Endothelial cell of umbilical vein (primary cell): ENCODE measurements at regions of chr15 and their contacts with region 1.

Region 1: DNA sequence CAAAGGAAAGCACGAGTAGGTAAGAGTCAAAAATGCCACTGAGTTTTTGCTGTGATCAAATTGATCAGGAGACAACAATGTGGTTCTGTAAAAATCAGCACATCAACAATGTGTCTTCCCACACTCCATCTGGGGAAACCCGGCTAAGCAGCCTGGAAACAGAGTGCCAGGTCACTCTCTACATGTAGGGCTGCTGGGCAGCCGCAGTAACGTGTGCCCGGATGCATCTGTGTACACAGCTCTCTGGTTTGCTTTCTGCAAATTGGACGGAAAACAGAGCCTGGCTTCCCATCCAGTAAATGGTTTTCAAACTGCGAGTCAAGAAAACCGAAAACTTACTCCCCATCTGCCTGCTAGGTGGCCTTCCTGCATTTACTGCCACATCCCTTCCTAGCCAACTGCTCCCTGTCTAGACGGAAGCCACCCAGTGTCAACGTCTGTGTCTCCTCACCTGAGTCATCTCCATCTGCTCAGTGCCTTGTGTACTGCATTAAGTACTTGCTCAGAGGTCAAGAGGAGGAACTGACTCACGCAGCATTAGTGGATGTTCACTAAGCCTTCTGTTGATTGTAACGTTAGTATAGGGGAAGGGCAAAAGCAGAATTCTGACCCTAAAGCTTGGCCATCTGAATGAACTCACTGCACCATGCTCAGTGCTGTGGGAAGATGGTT is 124.1 kb downstream of the TJP1 start:
- DNase-seq: peak; percentile 90
- H3K4me3 ChIP-seq: no peak overlapping the region
- H3K27ac ChIP-seq: peak overlapping the region; percentile 90
- H3K4me1 ChIP-seq: peaks cover 20% of the 10 kb centered on the region
- H3K27me3 ChIP-seq: no peaks in the 10 kb centered on the region
- CTCF ChIP-seq: no peak
- POLR2A ChIP-seq: no peak

Region 2: GRCh38 chr15:29674661-29675533 is 23.3 kb before region 1 on chr15:
- CTCF ChIA-PET with region 1: interaction called, 4 read pairs
- POLR2A ChIA-PET with region 1: no interaction called
- dilution Hi-C with region 1: no loop called
- intact Hi-C with region 1: loop called (anchors 2 kb)
- DNase-seq: peak; percentile 45
- H3K4me3 ChIP-seq: peak overlapping the region; percentile 49 to 78 (median 62)
- H3K27ac ChIP-seq: peak overlapping the region; percentile 17
- H3K4me1 ChIP-seq: peaks cover 13% of the 10 kb centered on the region
- H3K27me3 ChIP-seq: no peaks in the 10 kb centered on the region
- CTCF ChIP-seq: no peak
- POLR2A ChIP-seq: no peak

Region 3: DNA sequence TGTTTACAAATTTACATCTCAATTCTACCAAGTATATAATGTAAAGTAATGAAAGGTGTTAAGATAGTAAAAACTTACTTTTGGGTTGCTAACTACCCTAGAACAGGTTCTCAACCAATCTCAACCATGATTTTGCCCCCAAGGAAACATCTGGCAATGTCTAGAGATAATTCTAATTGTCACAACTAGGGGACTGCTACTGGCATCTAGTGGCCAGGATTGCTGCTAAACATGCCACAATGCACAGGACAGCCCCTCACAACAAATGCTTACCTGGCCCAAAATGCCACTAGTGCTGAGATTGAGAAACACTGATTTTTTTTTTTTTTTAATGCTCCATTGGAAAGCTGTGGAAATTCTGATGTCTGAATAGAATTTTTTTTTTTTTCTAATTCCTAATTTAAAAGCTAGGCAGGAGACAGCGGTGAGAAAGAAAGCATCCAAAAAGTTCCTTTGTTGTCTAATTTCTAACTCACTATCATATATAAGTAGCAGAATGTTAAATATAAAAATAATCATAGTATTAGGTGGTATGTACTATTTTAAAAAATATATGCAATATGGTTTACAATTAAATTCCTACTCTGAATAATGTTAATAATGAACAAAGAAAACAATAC is 42.6 kb after region 1 on chr15:
- CTCF ChIA-PET with region 1: no interaction called
- POLR2A ChIA-PET with region 1: no interaction called
- dilution Hi-C with region 1: no loop called
- intact Hi-C with region 1: loop called (anchors 5 kb)
- DNase-seq: no peak
- H3K4me3 ChIP-seq: no peak overlapping the region
- H3K27ac ChIP-seq: no peak overlapping the region
- H3K4me1 ChIP-seq: peaks cover 14% of the 10 kb centered on the region
- H3K27me3 ChIP-seq: no peaks in the 10 kb centered on the region
- CTCF ChIP-seq: peak; percentile 12
- POLR2A ChIP-seq: no peak

Region 4: GRCh38 chr15:29756358-29757267 is 58.4 kb after region 1 on chr15:
- CTCF ChIA-PET with region 1: no interaction called
- POLR2A ChIA-PET with region 1: no interaction called
- dilution Hi-C with region 1: no loop called
- intact Hi-C with region 1: loop called (anchors 5 kb)
- DNase-seq: peak; percentile 36
- H3K4me3 ChIP-seq: no peak overlapping the region
- H3K27ac ChIP-seq: no peak overlapping the region
- H3K4me1 ChIP-seq: peaks cover 3% of the 10 kb centered on the region
- H3K27me3 ChIP-seq: no peaks in the 10 kb centered on the region
- CTCF ChIP-seq: no peak
- POLR2A ChIP-seq: no peak

Region 5: DNA sequence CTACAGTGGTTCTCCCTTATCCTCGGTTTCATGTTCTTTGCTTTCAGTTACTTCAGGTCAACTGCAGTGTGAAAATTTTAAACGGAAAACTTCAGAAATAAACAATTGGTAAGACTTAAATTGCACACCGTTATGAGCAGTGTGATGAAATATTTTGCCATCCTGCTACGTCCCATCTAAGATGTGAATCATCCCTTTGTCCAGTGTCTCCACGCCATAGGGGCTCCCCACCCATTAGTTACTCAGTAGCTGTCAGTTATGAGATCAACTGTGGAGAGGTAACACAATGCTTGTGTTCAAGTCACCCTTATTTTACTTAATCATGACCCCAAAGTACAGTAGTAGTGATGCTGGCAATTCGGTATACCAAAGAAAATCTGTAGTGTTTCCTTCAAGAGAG is 76.7 kb after region 1 on chr15:
- CTCF ChIA-PET with region 1: no interaction called
- POLR2A ChIA-PET with region 1: no interaction called
- dilution Hi-C with region 1: no loop called
- intact Hi-C with region 1: no loop called
- DNase-seq: no peak
- H3K4me3 ChIP-seq: no peak overlapping the region
- H3K27ac ChIP-seq: no peak overlapping the region
- H3K4me1 ChIP-seq: no peaks in the 10 kb centered on the region
- H3K27me3 ChIP-seq: no peaks in the 10 kb centered on the region
- CTCF ChIP-seq: no peak
- POLR2A ChIP-seq: no peak